ENCODE measurements at regions of chr3 and their contacts with region 1.

Region 1: DNA sequence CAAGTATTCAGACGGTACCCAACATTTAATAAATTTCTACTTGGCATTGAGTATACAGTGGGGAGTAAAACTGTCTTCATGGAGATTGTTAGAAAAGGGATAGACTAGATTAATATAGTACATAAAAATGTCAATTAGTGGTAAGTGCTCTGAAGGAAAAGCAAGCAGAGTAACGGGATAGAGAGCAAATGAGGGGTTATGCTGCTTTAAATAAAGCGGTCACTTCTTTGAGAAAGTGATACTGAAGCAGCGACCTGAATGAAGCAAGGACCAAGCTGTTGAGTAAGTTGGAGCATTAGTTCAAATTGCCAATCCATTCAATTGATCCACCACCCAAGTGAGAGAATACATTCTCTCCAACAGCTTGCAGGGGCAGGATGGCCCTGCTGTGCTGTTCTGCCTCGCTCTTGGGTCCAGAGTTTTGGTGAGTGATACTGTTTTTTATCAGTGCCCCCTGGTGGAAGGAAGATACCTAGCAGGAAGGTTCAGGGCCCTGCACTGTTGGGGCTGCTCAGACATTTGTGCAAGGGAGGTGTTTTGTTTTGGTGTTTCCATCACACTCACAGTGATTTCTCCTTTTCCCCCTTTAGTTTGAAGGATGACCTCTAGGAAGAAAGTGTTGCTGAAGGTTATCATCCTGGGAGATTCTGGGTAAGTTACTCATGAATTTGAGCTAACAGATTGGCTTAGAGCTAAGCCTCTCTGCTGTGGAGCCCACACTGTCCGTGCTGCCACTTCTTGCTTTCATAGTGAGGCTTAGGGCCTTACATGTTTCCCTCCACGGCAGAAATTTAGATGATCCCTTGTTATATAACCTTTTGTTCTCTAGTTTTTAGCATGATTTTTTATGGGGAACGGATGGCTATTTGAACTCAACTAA is 69.0 kb downstream of the RAB7A start:
- DNase-seq: no peak
- H3K4me3 ChIP-seq: no peak overlapping the region
- H3K27me3 ChIP-seq: no peaks in the 10 kb centered on the region
- CTCF ChIP-seq: peak; percentile 79

Region 2: DNA sequence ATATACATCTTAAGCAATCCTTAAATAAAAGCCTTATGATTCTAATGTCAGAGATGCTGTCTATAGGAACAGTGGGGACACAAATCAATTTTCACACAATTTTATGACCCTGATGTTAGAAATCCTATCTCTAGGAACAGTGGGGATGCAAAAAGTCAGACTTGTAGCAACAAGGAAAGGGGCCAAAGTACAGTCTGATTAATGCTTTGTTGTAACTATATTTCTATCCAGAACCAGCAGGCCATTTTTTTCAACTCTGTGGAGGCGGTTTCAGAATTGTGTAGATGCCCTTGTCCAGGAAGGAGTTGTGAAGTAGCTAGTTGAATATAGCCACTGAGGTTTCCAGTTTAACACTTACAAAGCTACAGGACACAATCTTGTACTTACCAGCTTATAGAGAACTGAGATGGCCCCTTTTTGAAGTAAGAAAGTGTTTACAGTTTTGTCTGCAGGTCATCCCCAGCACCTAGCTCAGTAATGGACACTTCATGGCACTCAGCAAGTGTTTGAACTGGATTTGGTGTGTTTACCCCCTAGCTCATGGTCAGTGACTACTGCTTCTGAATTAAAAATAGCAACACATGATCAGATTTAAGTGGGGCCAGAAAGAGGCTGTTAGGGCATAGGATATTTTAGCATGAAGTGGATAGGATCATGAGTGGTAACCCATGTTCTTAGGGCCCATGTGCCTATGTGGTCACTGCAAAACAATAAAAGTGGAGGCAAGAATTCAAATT is 14.7 kb before region 1 on chr3:
- CTCF ChIA-PET with region 1: interaction called, 12 read pairs
- POLR2A ChIA-PET with region 1: no interaction called
- DNase-seq: no peak
- H3K4me3 ChIP-seq: no peak overlapping the region
- H3K27me3 ChIP-seq: no peaks in the 10 kb centered on the region
- CTCF ChIP-seq: no peak

Region 3: DNA sequence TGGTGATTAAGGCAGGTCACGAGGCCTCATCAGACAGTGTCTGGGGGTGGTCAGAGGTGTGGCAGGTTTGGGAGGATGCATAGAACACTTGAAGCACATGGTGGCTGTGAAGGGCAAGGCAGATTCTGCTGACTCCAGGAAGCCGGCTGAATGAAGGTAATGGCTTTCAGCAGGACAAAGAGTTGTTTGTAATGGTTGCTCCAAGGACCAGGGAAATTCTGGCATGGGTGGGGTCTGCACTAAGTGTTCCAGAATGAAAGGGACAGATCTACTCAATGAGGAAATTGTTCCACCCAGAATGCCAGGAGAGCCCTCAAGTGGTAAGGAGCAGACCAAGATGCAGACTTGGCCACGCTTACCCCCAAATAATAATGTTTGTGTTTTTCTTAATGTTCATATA is 13.7 kb after region 1 on chr3:
- CTCF ChIA-PET with region 1: interaction called, 14 read pairs
- POLR2A ChIA-PET with region 1: no interaction called
- DNase-seq: no peak
- H3K4me3 ChIP-seq: no peak overlapping the region
- H3K27me3 ChIP-seq: no peaks in the 10 kb centered on the region
- CTCF ChIP-seq: no peak

Region 4: GRCh38 chr3:128823008-128823407 is 28.0 kb after region 1 on chr3:
- CTCF ChIA-PET with region 1: interaction called, 10 read pairs
- POLR2A ChIA-PET with region 1: no interaction called
- DNase-seq: no peak
- H3K4me3 ChIP-seq: no peak overlapping the region
- H3K27me3 ChIP-seq: no peaks in the 10 kb centered on the region
- CTCF ChIP-seq: no peak

Region 5: GRCh38 chr3:128889139-128889894 is 94.3 kb after region 1 on chr3:
- CTCF ChIA-PET with region 1: no interaction called
- POLR2A ChIA-PET with region 1: no interaction called
- DNase-seq: no peak
- H3K4me3 ChIP-seq: no peak overlapping the region
- H3K27me3 ChIP-seq: no peaks in the 10 kb centered on the region
- CTCF ChIP-seq: no peak

Region 6: DNA sequence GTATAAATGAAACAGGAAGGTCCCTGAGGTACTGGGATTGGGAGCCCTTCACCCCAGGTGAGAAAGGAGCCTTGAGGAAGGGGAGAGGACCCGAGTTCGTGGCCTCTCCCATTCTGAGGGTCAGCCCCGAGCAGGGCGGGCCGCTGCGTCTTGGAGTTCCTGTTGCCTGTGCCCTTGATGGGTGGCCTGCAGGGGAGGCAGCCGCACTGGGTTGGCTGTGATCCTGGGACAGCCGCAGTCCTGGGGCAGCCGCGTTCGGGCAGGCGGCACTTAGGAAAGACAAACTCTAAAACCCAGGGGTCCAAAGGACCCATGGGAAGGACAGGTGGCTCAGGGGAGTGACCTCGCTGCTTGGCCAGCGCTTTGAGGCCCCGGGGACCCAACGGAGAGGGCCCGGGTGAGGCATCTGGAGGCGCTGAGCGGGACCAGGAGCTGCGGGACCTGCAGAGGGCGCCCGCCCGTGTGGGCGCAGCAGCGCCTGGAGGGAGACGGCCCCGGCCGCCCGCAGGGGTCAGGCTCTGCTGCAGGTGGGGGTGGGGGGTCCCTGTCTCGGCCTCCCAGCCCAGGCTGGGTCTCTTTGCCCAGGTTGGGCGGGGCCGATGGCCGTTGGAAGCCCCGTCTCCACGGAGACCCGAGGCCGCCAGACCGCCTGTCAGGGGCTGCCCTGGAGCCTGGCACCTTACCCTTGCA is 548.8 kb after region 1 on chr3:
- CTCF ChIA-PET with region 1: no interaction called
- POLR2A ChIA-PET with region 1: no interaction called
- DNase-seq: no peak
- H3K4me3 ChIP-seq: peak overlapping the region; percentile 22
- H3K27me3 ChIP-seq: peaks cover 2% of the 10 kb centered on the region; the same call in 1 of the 2 replicates
- CTCF ChIP-seq: peak; percentile 65

Measured in BJ (cell line).